Activated T-helper 2 cell treated with anti-CD3 and anti-CD28 coated beads, Interferon-gamma antibody, Interleukin-2, Interleukin-4, amounts not matched to agents 10 μg/mL and 5 μg/mL and 100 μg/mL, durations not matched to agents 14 hours and 24 hours and 36 hours (primary cell): ENCODE measurements at regions of chr3 and their contacts with region 1.

Region 1: GRCh38 chr3:28840976-28841376 is 439.9 kb upstream of the RBMS3 start:
- DNase-seq: no peak
- H3K4me3 Mint-ChIP-seq: no peak overlapping the region
- H3K27ac Mint-ChIP-seq: peak overlapping the region; percentile 69
- H3K4me1 Mint-ChIP-seq: peaks cover 31% of the 10 kb centered on the region
- H3K27me3 Mint-ChIP-seq: no peaks in the 10 kb centered on the region

Region 2: GRCh38 chr3:28348629-28349483 is 492.1 kb before region 1 on chr3 and contains the starts of genes AZI2 and ZCWPW2:
- intact Hi-C with region 1: loop called (anchors 5 kb)
- DNase-seq: peak; percentile 89
- H3K4me3 Mint-ChIP-seq: peak within 1 kb of the TSS; percentile 94
- H3K27ac Mint-ChIP-seq: peak within 1 kb of the TSS; percentile 98
- H3K4me1 Mint-ChIP-seq: peaks cover 48% of the 10 kb centered on the region
- H3K27me3 Mint-ChIP-seq: no peaks in the 10 kb centered on the region
- total RNA-seq, gene AZI2: 35.6 and 37.5 TPM in 2 replicates
- total RNA-seq, gene ZCWPW2: 0.14 and 0.16 TPM in 2 replicates

Region 3: DNA sequence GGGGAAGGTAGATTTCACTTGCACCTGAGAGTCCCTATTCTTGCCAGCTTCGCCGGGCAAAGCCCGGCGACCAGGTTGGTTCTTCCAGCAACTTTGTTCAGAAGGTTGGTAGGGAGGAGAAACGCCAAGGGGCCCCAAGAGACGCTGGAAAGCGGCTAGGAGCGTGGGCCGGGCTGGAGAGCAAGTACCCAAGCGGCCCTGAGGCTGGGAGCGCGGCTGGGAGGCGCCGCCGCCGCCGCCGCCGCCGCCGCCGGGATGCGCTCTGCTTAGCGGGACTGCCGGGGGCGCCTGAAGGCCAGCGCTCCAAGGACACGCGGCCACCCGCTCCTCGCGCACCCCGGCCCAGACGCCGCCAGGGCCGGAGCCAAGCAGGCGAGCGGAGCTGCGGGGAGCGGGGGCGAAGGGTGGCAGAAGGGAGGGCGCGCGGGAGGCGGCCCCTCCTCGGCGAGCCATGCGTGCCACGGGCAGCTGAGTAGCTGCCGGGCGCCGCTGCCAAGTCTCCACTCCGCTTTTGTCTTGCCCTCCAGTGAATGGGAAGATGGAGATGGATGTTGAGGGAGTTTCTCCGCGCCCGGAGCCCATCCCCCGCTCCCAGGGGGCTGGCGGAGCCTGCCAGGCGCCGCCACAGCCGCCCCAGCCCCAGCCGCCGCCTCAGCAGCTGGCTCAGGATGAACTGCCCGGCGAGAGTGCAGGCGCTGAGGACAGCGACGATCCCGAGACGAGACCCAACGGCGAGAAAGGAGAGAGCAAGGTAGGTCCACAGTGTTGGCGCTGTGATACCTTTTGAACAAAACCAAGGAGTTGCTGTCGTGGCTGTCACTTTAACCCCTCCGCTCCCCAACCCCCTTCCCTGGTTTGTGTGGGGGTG is 265.0 kb before region 1 on chr3:
- intact Hi-C with region 1: no loop called
- DNase-seq: no peak
- H3K4me3 Mint-ChIP-seq: no peak overlapping the region
- H3K27ac Mint-ChIP-seq: no peak overlapping the region
- H3K4me1 Mint-ChIP-seq: peaks cover 2% of the 10 kb centered on the region
- H3K27me3 Mint-ChIP-seq: peaks cover 53% of the 10 kb centered on the region

Region 4: GRCh38 chr3:28924744-28925360 is 83.9 kb after region 1 on chr3:
- intact Hi-C with region 1: loop called (anchors 1 kb)
- DNase-seq: no peak
- H3K4me3 Mint-ChIP-seq: no peak overlapping the region
- H3K27ac Mint-ChIP-seq: no peak overlapping the region
- H3K4me1 Mint-ChIP-seq: no peaks in the 10 kb centered on the region
- H3K27me3 Mint-ChIP-seq: peaks cover 6% of the 10 kb centered on the region

Region 5: GRCh38 chr3:28940530-28940929 is 99.6 kb after region 1 on chr3:
- intact Hi-C with region 1: loop called (anchors 1 kb)
- DNase-seq: no peak
- H3K4me3 Mint-ChIP-seq: no peak overlapping the region
- H3K27ac Mint-ChIP-seq: no peak overlapping the region
- H3K4me1 Mint-ChIP-seq: peaks cover 21% of the 10 kb centered on the region
- H3K27me3 Mint-ChIP-seq: no peaks in the 10 kb centered on the region

Region 6: DNA sequence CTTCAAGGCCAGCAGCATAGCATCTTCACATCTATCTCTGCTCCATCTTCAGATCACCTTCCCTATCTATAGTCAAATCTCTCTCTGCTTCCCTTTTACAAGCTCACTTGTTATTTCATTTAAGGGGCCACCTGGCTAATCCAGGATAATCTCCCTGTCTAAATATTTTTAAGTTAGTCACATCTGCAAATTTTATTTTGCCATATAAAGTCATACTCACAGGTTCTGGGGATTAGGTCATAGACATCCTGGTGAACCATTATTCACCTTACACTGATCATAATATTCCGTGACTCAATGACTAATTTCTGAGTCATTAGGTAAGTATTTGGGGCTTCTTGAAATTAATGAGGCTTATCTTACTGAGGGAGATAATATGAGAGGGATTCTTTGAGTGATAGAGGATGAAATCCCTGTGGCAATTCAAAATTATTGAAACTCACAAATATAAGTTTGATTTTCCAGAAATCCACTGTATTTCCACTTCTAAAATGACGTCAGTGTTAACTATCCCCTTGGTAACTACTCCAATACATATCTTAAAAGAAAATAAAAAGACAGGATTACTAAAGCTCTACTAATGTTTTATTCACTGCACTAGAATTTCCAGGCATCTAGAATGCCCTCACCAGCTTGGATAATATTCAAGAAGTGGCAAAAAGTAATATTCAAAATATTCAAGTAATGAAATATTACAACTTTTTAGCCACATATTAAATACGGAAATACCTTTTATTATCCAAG is 346.2 kb after region 1 on chr3:
- intact Hi-C with region 1: loop called (anchors 1 kb)
- DNase-seq: no peak
- H3K4me3 Mint-ChIP-seq: no peak overlapping the region
- H3K27ac Mint-ChIP-seq: peak overlapping the region; percentile 39
- H3K4me1 Mint-ChIP-seq: peaks cover 30% of the 10 kb centered on the region
- H3K27me3 Mint-ChIP-seq: no peaks in the 10 kb centered on the region

Region 7: GRCh38 chr3:29686889-29687592 is 846.1 kb after region 1 on chr3:
- intact Hi-C with region 1: loop called (anchors 1 kb)
- DNase-seq: no peak
- H3K4me3 Mint-ChIP-seq: no peak overlapping the region
- H3K27ac Mint-ChIP-seq: no peak overlapping the region
- H3K4me1 Mint-ChIP-seq: peaks cover 6% of the 10 kb centered on the region
- H3K27me3 Mint-ChIP-seq: peaks cover 5% of the 10 kb centered on the region

Region 8: DNA sequence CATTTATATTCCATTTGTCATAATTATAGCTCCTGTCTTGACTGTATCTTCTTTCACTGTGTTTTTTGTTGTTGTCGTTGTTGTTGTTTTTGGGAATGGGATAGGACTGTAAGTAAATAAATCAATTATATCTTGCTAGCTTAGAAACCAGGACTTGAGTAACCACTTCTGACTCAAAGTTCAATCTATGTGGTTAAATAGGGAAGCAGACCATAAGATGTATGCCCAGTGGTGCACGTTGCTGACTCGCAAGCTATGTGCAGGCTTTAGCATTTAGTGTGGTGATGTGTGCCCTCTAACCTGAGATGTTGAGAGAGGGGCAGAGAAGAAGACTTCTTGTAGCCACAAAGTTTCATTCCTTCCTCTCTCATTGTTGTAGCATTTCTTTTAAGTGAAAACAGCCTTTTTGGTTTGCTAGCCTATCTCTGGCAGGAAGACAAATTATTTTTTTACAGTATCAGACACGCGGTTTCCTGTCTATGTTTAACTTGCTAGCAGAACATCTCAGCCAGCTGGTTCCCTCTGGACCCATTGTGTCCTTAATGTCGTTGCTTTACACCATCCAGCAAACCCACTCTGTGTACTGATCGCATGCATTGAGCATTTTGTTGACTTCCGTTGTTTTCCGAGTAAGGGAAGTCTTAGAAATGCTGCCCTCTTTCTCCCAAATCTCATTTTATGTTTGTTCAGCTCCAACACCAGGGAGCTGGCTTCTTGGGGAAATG is 1817.5 kb after region 1 on chr3:
- intact Hi-C with region 1: loop called (anchors 10 kb)
- DNase-seq: peak; percentile 39
- H3K4me3 Mint-ChIP-seq: peak overlapping the region; percentile 76
- H3K27ac Mint-ChIP-seq: peak overlapping the region; percentile 92
- H3K4me1 Mint-ChIP-seq: peaks cover 90% of the 10 kb centered on the region
- H3K27me3 Mint-ChIP-seq: no peaks in the 10 kb centered on the region